Activated T-helper 2 cell treated with anti-CD3 and anti-CD28 coated beads, Interferon-gamma antibody, Interleukin-2, Interleukin-4, amounts not matched to agents 10 μg/mL and 5 μg/mL and 100 μg/mL, durations not matched to agents 14 hours and 24 hours and 36 hours (primary cell): ENCODE measurements at regions of chr5 and their contacts with region 1.

Region 1: DNA sequence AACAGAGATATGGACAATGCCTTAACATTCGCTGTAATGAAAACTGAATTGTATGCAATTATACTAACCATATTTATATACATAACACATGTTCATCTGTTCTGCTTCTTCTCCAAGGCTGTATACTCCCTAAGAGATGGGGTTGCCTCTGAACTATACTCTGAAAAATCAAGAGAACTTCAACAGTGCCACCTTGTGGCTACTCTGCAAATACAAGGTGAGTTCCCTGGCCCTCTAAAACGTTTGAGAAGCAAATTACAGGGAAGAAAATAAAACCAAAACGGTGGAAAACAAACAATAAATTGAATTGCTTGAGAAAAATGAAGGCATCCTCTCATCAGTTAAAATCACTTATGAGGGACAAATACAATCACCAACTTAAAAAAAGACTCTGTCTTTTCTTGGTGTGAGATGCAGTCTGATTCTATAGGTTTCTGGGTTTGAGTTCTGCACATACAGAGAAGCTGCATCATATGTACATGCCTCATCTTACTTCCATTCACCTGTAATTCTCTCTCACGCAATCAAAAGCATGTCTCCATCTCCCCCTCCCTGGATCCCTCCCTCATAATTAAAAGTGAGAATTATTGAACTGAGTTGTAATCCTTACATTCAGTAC is 98.6 kb downstream of the FBXW11 start:
- DNase-seq: peak; percentile 22
- H3K4me3 Mint-ChIP-seq: no peak overlapping the region
- H3K27ac Mint-ChIP-seq: peak overlapping the region; percentile 38
- H3K4me1 Mint-ChIP-seq: peaks cover 47% of the 10 kb centered on the region
- H3K27me3 Mint-ChIP-seq: no peaks in the 10 kb centered on the region

Region 2: DNA sequence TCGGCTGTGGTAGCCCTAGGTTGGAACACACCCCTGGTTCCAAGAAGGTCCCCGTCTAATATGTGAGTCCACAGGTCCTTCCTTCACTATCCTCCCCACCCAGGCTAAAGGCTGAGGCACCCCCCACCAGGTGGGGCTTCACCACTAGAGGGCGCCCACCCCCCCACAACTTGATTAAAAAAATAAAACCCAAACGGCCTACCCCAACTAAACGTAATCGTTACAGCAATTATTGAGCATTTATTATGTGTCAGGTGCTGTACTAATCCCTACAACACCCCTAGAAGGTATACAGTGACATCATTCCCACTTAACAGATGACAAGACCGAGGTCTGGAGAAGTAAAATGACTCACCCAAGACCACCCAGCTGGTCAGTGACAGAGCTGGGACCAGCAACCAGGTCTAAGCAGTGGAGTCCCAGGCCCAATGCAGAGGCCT is 423.4 kb before region 1 on chr5:
- intact Hi-C with region 1: loop called (anchors 2 kb)
- DNase-seq: no peak
- H3K4me3 Mint-ChIP-seq: no peak overlapping the region
- H3K27ac Mint-ChIP-seq: no peak overlapping the region
- H3K4me1 Mint-ChIP-seq: no peaks in the 10 kb centered on the region
- H3K27me3 Mint-ChIP-seq: no peaks in the 10 kb centered on the region

Region 3: GRCh38 chr5:171961117-171961516 is 53.3 kb after region 1 on chr5:
- intact Hi-C with region 1: loop called (anchors 1 kb)
- DNase-seq: peak; percentile 15
- H3K4me3 Mint-ChIP-seq: no peak overlapping the region
- H3K27ac Mint-ChIP-seq: peak overlapping the region; percentile 65
- H3K4me1 Mint-ChIP-seq: peaks cover 69% of the 10 kb centered on the region
- H3K27me3 Mint-ChIP-seq: no peaks in the 10 kb centered on the region

Region 4: DNA sequence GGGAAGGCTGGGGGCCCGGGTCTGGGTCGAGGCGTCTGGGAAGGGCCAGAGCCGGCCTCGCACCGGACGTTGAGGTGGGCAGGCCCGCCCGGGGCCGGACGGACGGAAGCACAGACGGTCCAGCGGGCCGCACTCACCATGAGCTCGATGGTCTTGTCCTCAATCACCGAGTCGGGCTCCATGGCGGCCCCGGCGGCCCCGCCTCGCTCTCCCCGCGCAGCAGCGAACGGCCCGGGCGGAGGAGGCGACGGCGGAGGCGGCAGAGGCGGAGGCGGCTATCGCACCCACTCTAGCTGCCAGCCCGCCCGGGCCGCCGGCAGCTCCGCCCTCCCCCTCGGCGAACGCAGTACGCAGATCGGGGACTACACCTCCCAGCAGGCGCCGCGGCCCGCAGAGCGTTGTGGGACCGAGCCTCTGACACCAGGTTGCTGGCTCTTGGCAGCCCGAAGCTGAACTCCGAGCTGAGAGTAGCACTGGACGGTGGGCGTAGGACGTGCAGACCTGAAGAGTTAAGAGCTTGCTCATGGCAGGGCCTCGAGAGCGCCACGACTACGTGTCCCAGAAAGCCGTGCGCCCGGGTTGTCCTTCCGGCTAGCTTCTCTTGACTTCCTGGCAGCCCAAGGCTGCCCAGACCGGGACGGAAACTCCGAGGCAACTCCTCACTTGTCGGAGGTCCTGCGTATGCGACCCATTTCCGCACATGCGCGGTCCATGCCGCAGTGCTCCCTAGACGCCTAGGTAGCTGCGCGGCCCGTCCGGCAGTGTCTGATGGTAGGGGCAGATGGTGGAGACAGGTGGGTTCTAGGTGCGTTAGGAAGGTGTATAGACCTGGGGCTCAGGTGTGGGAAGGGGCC is 98.7 kb after region 1 on chr5 and contains the start of gene FBXW11:
- intact Hi-C with region 1: loop called (anchors 1 kb)
- DNase-seq: peak; percentile 92
- H3K4me3 Mint-ChIP-seq: peak within 1 kb of the TSS; percentile 94
- H3K27ac Mint-ChIP-seq: peak within 1 kb of the TSS; percentile 96
- H3K4me1 Mint-ChIP-seq: peaks cover 56% of the 10 kb centered on the region
- H3K27me3 Mint-ChIP-seq: no peaks in the 10 kb centered on the region
- total RNA-seq, gene FBXW11: 47.3 and 51.4 TPM in 2 replicates

Region 5: GRCh38 chr5:172188033-172188892 is 280.4 kb after region 1 on chr5 and contains the start of gene STK10:
- intact Hi-C with region 1: loop called (anchors 10 kb)
- DNase-seq: peak; percentile 88
- H3K4me3 Mint-ChIP-seq: peak within 1 kb of the TSS; percentile 93
- H3K27ac Mint-ChIP-seq: peak within 1 kb of the TSS; percentile 94
- H3K4me1 Mint-ChIP-seq: peaks cover 25% of the 10 kb centered on the region
- H3K27me3 Mint-ChIP-seq: peaks cover 12% of the 10 kb centered on the region
- total RNA-seq, gene STK10: 102 and 105 TPM in 2 replicates

Region 6: GRCh38 chr5:172266676-172267092 is 358.9 kb after region 1 on chr5:
- intact Hi-C with region 1: no loop called
- DNase-seq: no peak
- H3K4me3 Mint-ChIP-seq: no peak overlapping the region
- H3K27ac Mint-ChIP-seq: no peak overlapping the region
- H3K4me1 Mint-ChIP-seq: peaks cover 4% of the 10 kb centered on the region
- H3K27me3 Mint-ChIP-seq: no peaks in the 10 kb centered on the region